ENCODE measurements at regions of chr2 and their contacts with region 1.

Region 1: DNA sequence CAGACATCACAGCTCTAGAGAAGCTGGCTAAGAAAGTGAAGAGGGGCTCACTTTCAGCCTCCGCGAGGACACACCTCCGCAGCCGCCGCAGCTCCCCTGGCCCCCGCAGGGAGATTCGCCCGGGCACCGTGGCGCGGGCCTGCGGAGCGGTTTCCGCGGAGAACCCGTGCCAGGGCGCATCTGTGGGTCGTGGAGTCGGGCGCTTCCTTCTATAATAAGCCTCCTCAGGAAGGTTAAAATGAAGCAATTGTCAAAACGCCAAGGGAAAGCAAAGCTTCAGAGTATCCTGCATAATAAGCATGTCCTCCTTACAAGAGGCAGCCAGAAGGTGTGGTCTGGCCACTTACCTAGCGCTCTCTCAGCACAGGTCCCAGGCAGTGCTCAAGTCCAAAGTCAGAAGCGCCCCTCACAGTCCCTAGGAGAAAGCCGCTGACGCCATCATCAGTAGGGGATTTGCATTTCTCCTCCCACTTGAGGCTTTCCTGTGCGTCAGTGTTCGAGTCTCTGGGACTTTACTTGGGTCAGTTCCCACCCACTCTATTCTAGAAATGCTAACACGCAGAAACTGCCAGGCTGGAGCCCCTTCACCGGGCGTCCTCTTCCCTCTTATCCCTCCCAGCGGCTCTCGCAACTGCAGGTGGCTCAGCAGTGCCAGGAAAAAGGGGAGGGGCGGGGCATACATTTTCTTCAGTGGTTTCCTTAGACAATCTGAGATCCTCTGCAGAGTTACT is at the start of gene STAT4:
- DNase-seq: peak; percentile 55 to 92 (median 84)
- ATAC-seq: peak; percentile 91
- H3K4me3 ChIP-seq: peak within 1 kb of the TSS; percentile 96
- H3K4me3 Mint-ChIP-seq: peak within 1 kb of the TSS; percentile 87 to 99 (median 95)
- H3K27ac ChIP-seq: peak within 1 kb of the TSS; percentile 98
- H3K27ac Mint-ChIP-seq: peak within 1 kb of the TSS; percentile 89 to 99 (median 95)
- H3K4me1 ChIP-seq: peaks cover 33 to 57% of the 10 kb centered on the region in 2 donors
- H3K4me1 Mint-ChIP-seq: peaks cover 33 to 70% (median 55%) of the 10 kb centered on the region in 7 donors
- H3K27me3 ChIP-seq: no peaks in the 10 kb centered on the region
- H3K27me3 Mint-ChIP-seq: no peaks in the 10 kb centered on the region
- total RNA-seq, gene STAT4: 106 to 132 (median 122) TPM

Region 2: DNA sequence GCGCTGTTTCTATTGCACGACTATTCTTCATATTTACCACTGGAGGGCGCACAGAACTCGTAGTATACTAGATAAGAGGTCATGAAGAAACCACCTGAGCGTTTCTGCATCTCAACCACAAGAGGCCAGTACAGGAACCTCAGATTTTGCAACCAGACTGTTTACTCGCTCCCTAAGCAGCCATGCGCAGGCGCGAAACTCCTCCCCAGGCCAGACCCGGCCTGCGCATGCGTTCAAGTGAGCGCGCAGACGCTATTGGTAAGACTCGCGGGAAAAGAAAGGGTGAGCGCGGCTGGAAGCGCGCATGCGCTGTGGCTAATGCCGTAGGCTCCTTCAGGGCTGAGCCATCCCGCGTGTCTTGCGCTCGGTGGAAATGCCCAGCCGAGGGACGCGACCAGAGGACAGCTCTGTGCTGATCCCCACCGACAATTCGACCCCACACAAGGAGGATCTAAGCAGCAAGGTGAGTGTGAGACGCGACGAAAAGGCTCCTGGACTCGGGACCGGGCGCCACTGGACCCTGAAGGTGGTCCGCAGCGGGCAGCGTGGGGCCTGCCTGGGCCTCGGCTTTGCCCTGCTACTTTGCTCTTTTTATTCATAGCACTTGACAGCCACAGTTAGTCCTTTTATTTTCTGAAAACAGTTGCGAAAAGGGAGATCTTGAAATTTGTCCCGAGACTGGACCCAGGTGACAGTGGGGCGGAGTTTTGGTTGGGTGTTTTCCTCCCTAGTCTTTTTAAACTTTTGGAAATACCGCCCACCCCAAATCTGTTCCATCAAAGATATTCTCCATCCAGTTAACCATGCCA is 1489.4 kb before region 1 on chr2 and contains the start of gene ASNSD1:
- CTCF ChIA-PET with region 1: no interaction called
- POLR2A ChIA-PET with region 1: no interaction called
- intact Hi-C with region 1: loop called in 1 of 2 experiments (anchors 2 kb)
- DNase-seq: peak; percentile 97 to 100 (median 99)
- ATAC-seq: peak; percentile 97
- H3K4me3 ChIP-seq: peak within 1 kb of the TSS; percentile 86
- H3K4me3 Mint-ChIP-seq: no peak within 1 kb of the TSS
- H3K27ac ChIP-seq: peak within 1 kb of the TSS; percentile 95
- H3K27ac Mint-ChIP-seq: peak within 1 kb of the TSS in 1 of 9 donors; percentile 91
- H3K4me1 ChIP-seq: peaks cover 32 to 38% of the 10 kb centered on the region in 2 donors
- H3K4me1 Mint-ChIP-seq: peaks cover 32 to 62% (median 43%) of the 10 kb centered on the region in 7 donors
- H3K27me3 ChIP-seq: no peaks in the 10 kb centered on the region
- H3K27me3 Mint-ChIP-seq: no peaks in the 10 kb centered on the region
- total RNA-seq, gene ASNSD1: 24.0 to 48.9 (median 40.7) TPM

Region 3: DNA sequence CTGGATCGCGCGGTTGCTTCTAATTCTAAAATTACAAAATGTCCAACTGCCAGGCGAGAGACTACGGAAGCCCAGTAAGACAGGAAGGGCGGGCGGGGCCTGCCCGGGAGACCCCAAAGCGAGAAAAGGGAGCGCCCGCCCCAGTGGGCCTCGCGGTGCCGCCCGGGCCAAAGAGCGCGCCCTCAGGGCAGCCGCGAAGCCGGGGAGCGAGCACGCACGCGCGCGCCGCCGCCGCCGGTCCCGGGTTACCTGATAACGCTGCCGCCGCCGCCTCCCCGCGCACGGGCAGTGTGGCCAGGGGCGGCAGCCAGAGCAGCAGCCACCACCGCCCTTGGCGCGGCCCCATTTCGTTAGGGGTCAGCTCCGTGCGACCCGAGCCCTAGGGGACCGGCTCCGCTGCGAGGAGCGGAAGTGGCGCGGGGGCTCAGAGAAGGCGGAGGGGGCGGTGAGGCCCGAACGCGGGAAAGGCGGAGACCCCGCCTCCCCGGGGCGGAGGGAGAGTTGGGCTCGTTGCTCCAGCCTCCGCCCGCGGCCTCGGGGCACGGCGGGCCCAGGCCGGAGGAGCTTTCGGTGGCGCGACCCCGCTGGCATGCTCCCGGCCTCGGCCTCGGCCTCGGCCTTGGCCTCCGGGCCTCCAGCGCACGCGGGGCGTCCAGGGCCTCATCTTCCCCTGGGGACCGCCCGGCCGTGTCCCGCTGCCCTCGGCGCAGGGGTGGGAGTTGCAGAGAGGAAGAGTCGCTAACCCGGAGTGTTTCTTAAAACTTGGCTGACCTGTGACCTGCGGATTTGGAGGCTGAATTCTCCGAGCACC is 616.2 kb before region 1 on chr2 and contains the start of gene NEMP2:
- CTCF ChIA-PET with region 1: no interaction called
- POLR2A ChIA-PET with region 1: no interaction called
- intact Hi-C with region 1: loop called (anchors 2 to 5 kb)
- DNase-seq: peak; percentile 72 to 88 (median 78)
- ATAC-seq: peak; percentile 83
- H3K4me3 ChIP-seq: peak within 1 kb of the TSS; percentile 73
- H3K4me3 Mint-ChIP-seq: peak within 1 kb of the TSS; percentile 91 to 99 (median 97)
- H3K27ac ChIP-seq: peak within 1 kb of the TSS; percentile 96
- H3K27ac Mint-ChIP-seq: peak within 1 kb of the TSS; percentile 99 to 100 (median 100)
- H3K4me1 ChIP-seq: peaks cover 20 to 36% of the 10 kb centered on the region in 2 donors
- H3K4me1 Mint-ChIP-seq: peaks cover 19 to 63% (median 60%) of the 10 kb centered on the region in 7 donors
- H3K27me3 ChIP-seq: no peaks in the 10 kb centered on the region
- H3K27me3 Mint-ChIP-seq: no peaks in the 10 kb centered on the region
- total RNA-seq, gene NEMP2: 11.1 to 30.8 (median 18.4) TPM

Region 4: DNA sequence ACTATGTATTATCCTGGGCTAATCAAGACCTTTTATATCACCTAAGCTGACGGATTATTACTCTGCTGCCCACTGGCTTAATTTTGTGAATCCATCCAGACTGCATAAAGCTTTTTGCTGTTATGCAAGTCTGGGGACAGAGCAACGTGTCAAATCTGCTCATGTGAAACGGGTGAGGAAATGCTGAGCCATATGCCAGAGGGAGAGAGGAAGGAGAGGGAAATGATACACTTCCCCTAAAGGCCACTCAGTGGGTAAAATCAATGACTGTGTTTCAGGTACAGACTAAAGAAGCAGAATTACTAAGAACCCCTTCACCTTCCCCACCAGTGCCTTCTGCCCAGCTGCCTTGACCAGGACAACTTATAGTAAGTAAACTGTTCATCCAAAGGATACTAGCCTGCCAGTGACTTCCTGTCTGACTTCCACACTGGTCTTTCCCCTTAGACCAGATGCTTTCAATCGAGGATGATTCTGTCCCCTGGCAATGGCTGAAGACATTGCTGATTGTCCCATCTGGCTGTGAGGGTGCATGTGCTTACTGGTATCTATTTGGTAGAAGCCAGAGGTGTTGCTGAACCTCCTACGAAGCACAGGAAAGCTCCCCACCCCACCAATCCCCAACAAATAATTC is 179.8 kb before region 1 on chr2:
- CTCF ChIA-PET with region 1: no interaction called
- POLR2A ChIA-PET with region 1: no interaction called
- intact Hi-C with region 1: no loop called
- DNase-seq: no peak
- ATAC-seq: peak; percentile 60
- H3K4me3 ChIP-seq: no peak overlapping the region
- H3K4me3 Mint-ChIP-seq: no peak overlapping the region
- H3K27ac ChIP-seq: peak overlapping the region; percentile 32
- H3K27ac Mint-ChIP-seq: peak overlapping the region; percentile 48 to 90 (median 74)
- H3K4me1 ChIP-seq: no peaks in the 10 kb centered on the region
- H3K4me1 Mint-ChIP-seq: peaks cover 10 to 65% (median 18%) of the 10 kb centered on the region in 7 donors
- H3K27me3 ChIP-seq: no peaks in the 10 kb centered on the region
- H3K27me3 Mint-ChIP-seq: no peaks in the 10 kb centered on the region

Region 5: DNA sequence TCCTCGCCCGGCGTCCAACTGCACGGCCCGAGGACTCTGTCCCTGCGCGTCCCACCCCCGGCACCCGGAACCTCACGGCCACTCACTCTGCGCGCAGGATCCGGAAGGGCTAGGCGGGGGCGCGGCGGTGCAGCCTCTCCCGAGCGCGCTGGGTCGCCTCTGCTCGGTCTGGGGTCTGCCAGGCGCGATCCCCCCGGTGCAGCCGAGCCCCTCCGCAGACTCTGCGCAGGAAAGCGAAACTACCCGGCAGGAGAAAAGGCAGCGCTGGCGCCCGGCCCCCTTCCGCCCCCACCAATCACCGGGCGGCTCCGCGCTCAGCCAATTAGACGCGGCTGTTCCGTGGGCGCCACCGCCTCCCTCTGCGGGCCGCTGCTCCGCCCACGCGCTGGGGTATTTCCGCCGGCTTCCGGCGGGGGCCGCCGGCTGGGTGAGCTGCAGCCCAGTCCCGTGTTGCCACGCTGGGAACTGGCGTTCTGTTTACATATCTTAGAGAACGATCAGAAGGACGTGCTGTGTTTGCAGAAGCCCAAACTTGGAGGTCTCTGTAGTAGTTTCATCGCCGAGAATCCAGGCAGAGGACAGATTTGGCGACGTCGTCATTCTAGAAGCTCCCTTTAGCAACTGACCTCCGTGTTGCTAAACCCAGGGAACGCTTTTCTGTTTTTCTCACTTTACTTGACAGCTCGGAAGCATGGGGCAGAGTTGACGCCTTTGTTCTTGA is 136.7 kb before region 1 on chr2 and contains the start of gene STAT1:
- CTCF ChIA-PET with region 1: interaction called, 7 read pairs
- POLR2A ChIA-PET with region 1: interaction called, 6 read pairs
- intact Hi-C with region 1: loop called in 1 of 2 experiments (anchors 1 kb)
- DNase-seq: peak; percentile 93 to 99 (median 97)
- ATAC-seq: peak; percentile 97
- H3K4me3 ChIP-seq: peak within 1 kb of the TSS; percentile 69
- H3K4me3 Mint-ChIP-seq: no peak within 1 kb of the TSS
- H3K27ac ChIP-seq: peak within 1 kb of the TSS; percentile 87
- H3K27ac Mint-ChIP-seq: no peak within 1 kb of the TSS
- H3K4me1 ChIP-seq: peaks cover 41 to 48% of the 10 kb centered on the region in 2 donors
- H3K4me1 Mint-ChIP-seq: peaks cover 23 to 51% (median 42%) of the 10 kb centered on the region in 7 donors
- H3K27me3 ChIP-seq: no peaks in the 10 kb centered on the region
- H3K27me3 Mint-ChIP-seq: no peaks in the 10 kb centered on the region
- total RNA-seq, gene STAT1: 74.1 to 1,177 (median 89.6) TPM

Region 6: DNA sequence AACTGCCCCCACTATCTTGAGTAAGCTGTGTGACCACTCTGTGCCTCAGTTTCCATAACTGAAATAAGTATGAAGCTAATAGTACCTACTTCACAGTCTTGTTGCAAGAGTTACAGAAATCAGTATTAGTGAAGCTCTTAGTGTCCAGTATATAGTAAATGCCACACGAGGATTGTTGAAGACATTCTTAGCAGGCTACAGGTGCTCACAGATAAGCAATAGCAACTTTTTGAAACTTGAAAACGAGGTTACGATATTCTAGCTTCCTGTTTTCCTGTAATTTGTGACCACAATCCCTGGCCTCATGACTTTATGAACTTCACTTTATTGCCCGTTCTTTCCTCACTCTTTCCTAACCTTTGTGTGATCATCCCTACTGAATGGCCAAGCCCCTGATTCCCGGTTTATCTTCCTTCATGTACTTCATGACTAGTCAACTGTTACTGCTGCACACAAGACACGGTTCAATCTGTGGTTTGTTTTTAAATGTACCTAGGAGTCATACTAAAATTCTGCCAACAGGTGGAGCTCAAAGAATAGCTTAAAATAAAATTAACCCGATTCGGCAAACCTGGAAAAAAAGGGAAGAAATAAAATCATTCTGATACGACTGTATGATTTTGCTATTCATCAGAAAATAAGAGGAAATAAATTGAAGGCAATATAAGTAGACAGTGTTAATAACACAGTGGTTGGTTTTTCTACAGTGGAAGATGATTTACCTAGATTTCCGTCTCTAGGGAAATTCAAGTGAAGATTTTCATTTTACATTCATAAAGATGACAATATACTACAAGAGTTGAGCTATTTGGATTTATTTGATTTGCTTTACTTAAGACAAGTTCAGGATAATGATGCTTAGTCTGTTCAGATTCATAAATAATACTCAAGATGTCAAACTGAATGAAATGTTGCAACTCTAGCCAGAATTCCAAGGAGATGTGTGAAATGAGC is 98.7 kb before region 1 on chr2:
- CTCF ChIA-PET with region 1: interaction called, 488 read pairs
- POLR2A ChIA-PET with region 1: interaction called, 92 read pairs
- intact Hi-C with region 1: loop called (anchors 1 kb)
- DNase-seq: peak in 7 of 9 donors; percentile 28 to 66 (median 62)
- ATAC-seq: peak; percentile 84
- H3K4me3 ChIP-seq: no peak overlapping the region
- H3K4me3 Mint-ChIP-seq: no peak overlapping the region
- H3K27ac ChIP-seq: peak overlapping the region; percentile 29
- H3K27ac Mint-ChIP-seq: peak overlapping the region in 1 of 9 donors; percentile 80
- H3K4me1 ChIP-seq: peaks cover 26 to 30% of the 10 kb centered on the region in 2 donors
- H3K4me1 Mint-ChIP-seq: peaks cover 8 to 29% (median 22%) of the 10 kb centered on the region in 7 donors
- H3K27me3 ChIP-seq: no peaks in the 10 kb centered on the region
- H3K27me3 Mint-ChIP-seq: no peaks in the 10 kb centered on the region

Region 7: DNA sequence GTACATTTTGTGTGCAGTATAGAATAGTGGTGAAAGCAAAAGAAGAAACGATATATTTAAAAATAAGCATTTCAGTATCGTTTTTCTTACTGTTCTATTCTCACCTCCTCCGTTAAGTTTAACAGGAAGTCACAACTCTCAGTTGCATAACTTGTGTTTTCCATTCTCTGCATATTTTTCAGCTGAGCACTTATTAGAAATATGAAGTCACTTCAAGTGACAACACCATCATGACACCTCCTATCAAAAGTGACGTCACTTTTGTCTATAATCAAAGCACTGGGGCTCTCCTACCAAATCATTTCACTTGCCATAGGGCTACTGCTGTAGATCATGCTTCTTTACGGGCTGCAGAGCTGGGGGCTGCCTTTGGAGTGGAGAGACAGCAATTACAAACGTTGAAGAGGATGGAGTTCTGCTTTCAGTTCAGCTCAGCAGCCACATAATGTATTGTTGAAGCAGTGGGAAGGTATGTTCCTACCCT is 36.3 kb before region 1 on chr2:
- CTCF ChIA-PET with region 1: interaction called, 11 read pairs
- POLR2A ChIA-PET with region 1: interaction called, 8 read pairs
- intact Hi-C with region 1: loop called (anchors 1 to 2 kb)
- DNase-seq: peak in 8 of 9 donors; percentile 30 to 70 (median 42)
- ATAC-seq: peak; percentile 70
- H3K4me3 ChIP-seq: no peak overlapping the region
- H3K4me3 Mint-ChIP-seq: peak overlapping the region; percentile 56 to 83 (median 65)
- H3K27ac ChIP-seq: peak overlapping the region; percentile 26
- H3K27ac Mint-ChIP-seq: peak overlapping the region; percentile 67 to 95 (median 88)
- H3K4me1 ChIP-seq: peaks cover 22 to 53% of the 10 kb centered on the region in 2 donors
- H3K4me1 Mint-ChIP-seq: peaks cover 39 to 90% (median 80%) of the 10 kb centered on the region in 7 donors
- H3K27me3 ChIP-seq: no peaks in the 10 kb centered on the region
- H3K27me3 Mint-ChIP-seq: no peaks in the 10 kb centered on the region

Region 8: DNA sequence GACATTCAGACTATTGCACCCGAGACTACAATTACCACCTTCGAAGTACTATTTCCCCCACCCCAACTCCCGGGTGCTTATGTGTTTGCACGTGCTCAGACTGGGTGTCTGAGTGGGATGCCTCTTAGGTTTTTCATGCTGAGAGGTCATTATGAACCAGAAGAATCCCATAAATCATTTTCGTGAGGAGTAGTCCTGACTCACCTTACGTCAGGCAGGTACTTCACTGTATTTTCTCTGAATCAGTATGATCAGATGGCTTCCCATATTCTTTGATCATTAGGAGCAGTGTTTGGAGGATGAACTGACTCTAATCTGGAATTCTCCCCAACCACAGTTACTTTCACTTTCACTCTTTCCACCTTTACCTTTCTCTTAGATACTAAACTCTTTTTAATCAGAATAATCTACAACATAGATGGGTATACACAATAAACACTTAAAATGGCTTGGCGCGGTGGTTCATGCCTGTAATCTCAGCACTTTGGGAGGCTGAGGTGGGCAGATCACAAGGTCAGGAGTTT is 38.4 kb after region 1 on chr2:
- CTCF ChIA-PET with region 1: no interaction called
- POLR2A ChIA-PET with region 1: no interaction called
- intact Hi-C with region 1: loop called in 1 of 2 experiments (anchors 5 kb)
- DNase-seq: peak in 3 of 9 donors; percentile 13 to 20 (median 14)
- ATAC-seq: no peak
- H3K4me3 ChIP-seq: peak overlapping the region; percentile 40
- H3K4me3 Mint-ChIP-seq: peak overlapping the region; percentile 70 to 91 (median 83)
- H3K27ac ChIP-seq: peak overlapping the region; percentile 21
- H3K27ac Mint-ChIP-seq: peak overlapping the region; percentile 59 to 95 (median 91)
- H3K4me1 ChIP-seq: peaks cover 19 to 20% of the 10 kb centered on the region in 2 donors
- H3K4me1 Mint-ChIP-seq: peaks cover 17 to 69% (median 61%) of the 10 kb centered on the region in 7 donors
- H3K27me3 ChIP-seq: no peaks in the 10 kb centered on the region
- H3K27me3 Mint-ChIP-seq: no peaks in the 10 kb centered on the region

Measured in naive thymus-derived CD4-positive, alpha-beta T cell (primary cell).